IMR-90 (cell line): ENCODE measurements at regions of chr14 and their contacts with region 1.

Region 1: DNA sequence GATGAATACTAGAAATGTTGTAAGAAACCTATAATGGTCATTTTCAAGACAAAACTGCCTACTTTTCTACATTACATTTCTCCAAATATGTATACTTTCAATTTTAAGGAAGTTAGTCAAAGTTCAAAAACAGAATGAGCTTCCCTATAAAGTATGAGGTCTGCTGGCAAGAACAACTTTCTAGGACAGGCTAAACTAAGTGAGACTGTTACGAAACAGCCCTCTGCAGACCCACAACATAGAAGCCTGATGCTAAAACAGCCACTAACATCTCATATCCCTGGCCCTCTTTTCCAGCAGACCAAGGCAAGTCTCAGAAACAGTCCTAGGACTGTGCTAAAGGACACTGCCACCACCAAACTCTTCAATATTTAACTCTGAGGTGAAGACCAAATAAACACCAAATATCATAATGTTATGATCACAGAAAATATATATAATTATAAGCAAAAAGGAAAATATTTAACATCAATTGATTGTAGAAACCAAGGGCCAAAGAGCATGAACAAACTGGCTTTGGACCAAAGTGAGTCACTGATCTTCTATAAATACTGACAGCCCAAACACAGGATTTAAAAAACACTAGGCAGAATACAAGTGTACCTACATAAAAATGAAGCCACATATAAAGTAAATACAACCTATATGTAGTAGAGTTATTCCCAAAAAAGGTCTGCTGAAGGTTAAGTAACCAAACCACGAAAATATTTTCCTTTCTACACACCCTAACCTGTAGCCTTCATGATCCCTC is 27.7 kb downstream of the PPP4R3A start:
- DNase-seq: peak; percentile 78
- ATAC-seq: peak; percentile 89
- H3K4me3 ChIP-seq: no peak overlapping the region
- H3K27ac ChIP-seq: peak overlapping the region; percentile 68; the same call in 1 of the 2 replicates
- H3K4me1 ChIP-seq: peaks cover 7% of the 10 kb centered on the region
- H3K27me3 ChIP-seq: no peaks in the 10 kb centered on the region
- CTCF ChIP-seq: no peak
- POLR2A ChIP-seq: no peak
- RAD21 ChIP-seq: no peak

Region 2: GRCh38 chr14:91911474-91912032 is 429.1 kb after region 1 on chr14:
- CTCF ChIA-PET with region 1: no interaction called
- POLR2A ChIA-PET with region 1: no interaction called
- dilution Hi-C with region 1: no loop called
- in situ Hi-C with region 1: no loop called
- intact Hi-C with region 1: no loop called
- DNase-seq: peak; percentile 33
- ATAC-seq: peak; percentile 63; the same call in 1 of the 2 replicates
- H3K4me3 ChIP-seq: no peak overlapping the region
- H3K27ac ChIP-seq: no peak overlapping the region
- H3K4me1 ChIP-seq: no peaks in the 10 kb centered on the region
- H3K27me3 ChIP-seq: no peaks in the 10 kb centered on the region
- CTCF ChIP-seq: peak; percentile 43
- POLR2A ChIP-seq: no peak
- RAD21 ChIP-seq: peak; percentile 52

Region 3: GRCh38 chr14:92014040-92014439 is 531.6 kb after region 1 on chr14:
- CTCF ChIA-PET with region 1: no interaction called
- POLR2A ChIA-PET with region 1: no interaction called
- dilution Hi-C with region 1: no loop called
- in situ Hi-C with region 1: loop called (anchors 25 kb)
- intact Hi-C with region 1: no loop called
- DNase-seq: no peak
- ATAC-seq: 0 out of 2 replicates have a peak, but pooled peaks have one; percentile 32
- H3K4me3 ChIP-seq: no peak overlapping the region
- H3K27ac ChIP-seq: no peak overlapping the region
- H3K4me1 ChIP-seq: no peaks in the 10 kb centered on the region
- H3K27me3 ChIP-seq: no peaks in the 10 kb centered on the region
- CTCF ChIP-seq: no peak
- POLR2A ChIP-seq: no peak
- RAD21 ChIP-seq: no peak

Region 4: GRCh38 chr14:92154283-92154942 is 672.0 kb after region 1 on chr14:
- CTCF ChIA-PET with region 1: no interaction called
- POLR2A ChIA-PET with region 1: no interaction called
- dilution Hi-C with region 1: no loop called
- in situ Hi-C with region 1: no loop called
- intact Hi-C with region 1: no loop called
- DNase-seq: peak; percentile 21
- ATAC-seq: no peak
- H3K4me3 ChIP-seq: no peak overlapping the region
- H3K27ac ChIP-seq: no peak overlapping the region
- H3K4me1 ChIP-seq: no peaks in the 10 kb centered on the region; the same call in 1 of the 2 replicates
- H3K27me3 ChIP-seq: no peaks in the 10 kb centered on the region
- CTCF ChIP-seq: no peak
- POLR2A ChIP-seq: no peak
- RAD21 ChIP-seq: no peak

Region 5: GRCh38 chr14:92819011-92819597 is 1336.7 kb after region 1 on chr14:
- CTCF ChIA-PET with region 1: no interaction called
- POLR2A ChIA-PET with region 1: no interaction called
- dilution Hi-C with region 1: no loop called
- in situ Hi-C with region 1: loop called (anchors 25 kb)
- intact Hi-C with region 1: loop called (anchors 10 kb)
- DNase-seq: no peak
- ATAC-seq: no peak
- H3K4me3 ChIP-seq: no peak overlapping the region
- H3K27ac ChIP-seq: no peak overlapping the region
- H3K4me1 ChIP-seq: no peaks in the 10 kb centered on the region
- H3K27me3 ChIP-seq: no peaks in the 10 kb centered on the region
- CTCF ChIP-seq: no peak
- POLR2A ChIP-seq: no peak
- RAD21 ChIP-seq: no peak